Activated CD4-positive, alpha-beta T cell treated with anti-CD3 and anti-CD28 coated beads, Interleukin-2, amount 10 ng/mL, durations not matched to agents 7 days and 5 days (primary cell): ENCODE measurements at regions of chr2 and their contacts with region 1.

Region 1: DNA sequence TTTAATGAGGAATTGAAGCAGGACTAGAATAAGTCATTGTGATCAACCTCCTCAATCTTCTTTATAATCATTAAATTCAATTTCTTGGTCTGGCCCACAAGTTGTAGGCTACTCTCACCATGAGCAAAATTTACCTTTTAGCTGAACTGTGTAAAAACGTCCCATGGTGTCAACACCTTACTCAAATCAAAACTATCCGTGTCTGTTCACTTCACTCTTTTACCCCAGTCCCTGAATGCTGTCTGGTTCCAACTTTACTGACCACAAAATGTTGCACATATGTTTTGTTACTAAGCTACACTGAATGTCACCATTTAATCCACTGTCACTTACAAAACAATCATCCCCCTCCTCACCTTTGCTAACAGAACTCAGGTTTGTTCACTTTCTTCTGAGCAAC is 951.6 kb upstream of the SLC39A10 start:
- DNase-seq: no peak
- H3K4me3 Mint-ChIP-seq: no peak overlapping the region
- H3K27ac Mint-ChIP-seq: no peak overlapping the region
- H3K4me1 Mint-ChIP-seq: no peaks in the 10 kb centered on the region
- H3K27me3 Mint-ChIP-seq: no peaks in the 10 kb centered on the region

Region 2: DNA sequence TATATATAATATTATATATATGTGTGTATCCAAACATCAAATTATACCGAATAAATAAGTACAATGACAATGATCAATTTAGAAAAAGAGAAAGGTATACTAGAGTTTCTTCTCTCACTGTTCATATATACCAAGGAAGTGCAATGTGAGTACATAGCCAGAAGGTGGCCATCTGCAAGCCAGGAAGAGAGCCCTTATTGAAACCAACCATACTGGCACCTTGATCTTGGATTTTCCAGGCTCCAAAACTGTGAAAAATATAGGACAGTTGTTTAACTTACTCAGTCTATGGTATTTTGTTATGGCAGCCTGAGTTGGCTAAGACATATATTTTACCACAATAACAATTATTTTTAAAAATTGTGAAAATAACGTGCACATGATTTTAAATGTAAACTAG is 538.6 kb before region 1 on chr2:
- CTCF ChIA-PET with region 1: no interaction called
- POLR2A ChIA-PET with region 1: interaction called, 10 read pairs
- DNase-seq: peak; percentile 22
- H3K4me3 Mint-ChIP-seq: no peak overlapping the region
- H3K27ac Mint-ChIP-seq: no peak overlapping the region
- H3K4me1 Mint-ChIP-seq: no peaks in the 10 kb centered on the region
- H3K27me3 Mint-ChIP-seq: no peaks in the 10 kb centered on the region

Region 3: DNA sequence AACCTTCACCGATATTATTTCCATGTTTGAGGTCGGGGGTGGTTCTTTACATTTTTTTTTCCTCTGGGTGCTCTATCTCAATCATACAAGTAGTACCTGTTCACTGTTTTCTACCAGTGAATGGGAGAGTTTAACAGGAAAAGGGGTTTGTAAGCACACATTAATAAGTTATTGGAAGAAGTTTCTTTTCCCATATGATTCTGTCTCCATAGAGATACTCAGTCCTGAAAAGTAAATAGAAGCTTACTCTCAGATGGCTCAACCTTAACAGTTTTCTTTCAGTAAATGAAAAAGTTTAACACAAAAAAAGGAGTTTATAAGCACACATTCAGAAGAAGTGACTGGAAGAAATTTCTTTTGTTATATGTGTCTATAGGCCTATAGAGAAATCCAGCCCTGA is 44.0 kb before region 1 on chr2:
- CTCF ChIA-PET with region 1: no interaction called
- POLR2A ChIA-PET with region 1: no interaction called
- DNase-seq: no peak
- H3K4me3 Mint-ChIP-seq: no peak overlapping the region
- H3K27ac Mint-ChIP-seq: no peak overlapping the region
- H3K4me1 Mint-ChIP-seq: no peaks in the 10 kb centered on the region
- H3K27me3 Mint-ChIP-seq: no peaks in the 10 kb centered on the region